ENCODE measurements at regions of chr2 and their contacts with region 1.

Region 1: DNA sequence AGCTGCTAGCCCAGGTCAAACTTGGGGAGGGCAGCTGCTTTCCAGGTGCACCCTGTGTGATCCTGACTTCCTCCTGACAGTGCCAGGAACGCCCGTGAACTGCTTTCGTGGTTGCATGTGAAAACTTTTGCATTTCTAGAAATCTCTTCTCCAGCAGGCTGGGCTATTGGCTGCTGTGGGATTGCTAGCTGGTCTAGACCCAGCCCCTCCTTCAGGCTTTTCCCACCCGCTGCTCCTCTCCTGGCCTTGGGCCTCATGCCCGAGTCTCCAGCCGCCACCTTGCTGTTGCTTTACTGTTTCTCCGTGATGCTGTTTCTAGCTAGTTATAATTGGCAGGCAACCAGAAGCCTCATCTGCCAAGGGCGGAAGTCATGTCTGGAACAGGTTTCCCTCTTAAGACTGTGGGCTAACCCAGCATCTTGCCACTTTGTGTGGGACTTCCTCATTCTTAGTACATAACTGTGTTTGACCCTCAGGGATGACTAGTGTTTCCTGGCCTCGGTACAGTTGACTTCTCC is 27.0 kb upstream of the MGAT4A start:
- DNase-seq: peak; percentile 98
- ATAC-seq: peak; percentile 97
- H3K4me3 ChIP-seq: peak overlapping the region; percentile 37
- H3K27ac ChIP-seq: peak overlapping the region; percentile 65
- H3K4me1 ChIP-seq: peaks cover 24% of the 10 kb centered on the region
- H3K27me3 ChIP-seq: no peaks in the 10 kb centered on the region
- CTCF ChIP-seq: no peak; the same call in 1 of the 2 replicates

Region 2: GRCh38 chr2:98713332-98714015 is 44.5 kb before region 1 on chr2:
- CTCF ChIA-PET with region 1: no interaction called
- POLR2A ChIA-PET with region 1: no interaction called
- intact Hi-C with region 1: loop called (anchors 1 kb)
- DNase-seq: peak; percentile 60
- ATAC-seq: peak; percentile 94
- H3K4me3 ChIP-seq: no peak overlapping the region
- H3K27ac ChIP-seq: peak overlapping the region; percentile 41
- H3K4me1 ChIP-seq: peaks cover 10% of the 10 kb centered on the region
- H3K27me3 ChIP-seq: no peaks in the 10 kb centered on the region
- CTCF ChIP-seq: no peak

Region 3: DNA sequence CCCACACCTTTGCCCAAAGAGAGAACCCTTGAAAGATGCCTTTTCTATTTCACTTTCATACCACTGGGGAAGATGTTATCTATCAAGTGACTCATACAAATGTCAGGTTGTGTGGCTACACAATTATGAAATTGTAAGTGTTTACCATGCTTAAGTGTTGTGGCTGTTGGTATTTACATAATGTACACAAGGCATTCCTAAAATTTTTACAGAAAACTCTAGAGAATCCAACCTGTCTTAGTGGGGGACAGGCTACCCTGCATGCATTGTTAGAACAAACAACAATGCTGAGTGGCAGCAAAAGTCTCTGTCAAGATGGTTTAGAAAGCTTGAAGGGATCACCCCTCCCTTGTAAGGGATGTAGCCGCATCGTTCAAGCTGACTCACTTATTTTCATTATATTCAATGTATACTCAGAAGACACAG is 21.5 kb before region 1 on chr2:
- CTCF ChIA-PET with region 1: no interaction called
- POLR2A ChIA-PET with region 1: no interaction called
- intact Hi-C with region 1: loop called (anchors 1 kb)
- DNase-seq: peak; percentile 86
- ATAC-seq: peak; percentile 87
- H3K4me3 ChIP-seq: no peak overlapping the region
- H3K27ac ChIP-seq: peak overlapping the region; percentile 13; the same call in 1 of the 2 replicates
- H3K4me1 ChIP-seq: peaks cover 29% of the 10 kb centered on the region
- H3K27me3 ChIP-seq: no peaks in the 10 kb centered on the region
- CTCF ChIP-seq: no peak